Stomach (tissue), 19 donors: ENCODE measurements at regions of chr14 and their contacts with region 1.

Region 1: GRCh38 chr14:96357216-96357615 is 5.9 kb downstream of the ATG2B start:
- DNase-seq: no peak
- H3K4me3 ChIP-seq: no peak overlapping the region
- H3K27ac ChIP-seq: no peak overlapping the region
- H3K4me1 ChIP-seq: peaks cover 12 to 42% (median 30%) of the 10 kb centered on the region in 4 donors
- H3K27me3 ChIP-seq: no peaks in the 10 kb centered on the region
- CTCF ChIP-seq: peak in 1 of 7 experiments; percentile 17
- EP300 ChIP-seq: no peak
- POLR2A ChIP-seq: no peak

Region 2: GRCh38 chr14:96399405-96399804 is 42.2 kb after region 1 on chr14:
- intact Hi-C with region 1: loop called (anchors 5 kb)
- DNase-seq: no peak
- H3K4me3 ChIP-seq: no peak overlapping the region
- H3K27ac ChIP-seq: no peak overlapping the region
- H3K4me1 ChIP-seq: no peaks in the 10 kb centered on the region
- H3K27me3 ChIP-seq: no peaks in the 10 kb centered on the region
- CTCF ChIP-seq: no peak
- EP300 ChIP-seq: no peak
- POLR2A ChIP-seq: no peak